ENCODE measurements at regions of chr9 and their contacts with region 1.

Region 1: DNA sequence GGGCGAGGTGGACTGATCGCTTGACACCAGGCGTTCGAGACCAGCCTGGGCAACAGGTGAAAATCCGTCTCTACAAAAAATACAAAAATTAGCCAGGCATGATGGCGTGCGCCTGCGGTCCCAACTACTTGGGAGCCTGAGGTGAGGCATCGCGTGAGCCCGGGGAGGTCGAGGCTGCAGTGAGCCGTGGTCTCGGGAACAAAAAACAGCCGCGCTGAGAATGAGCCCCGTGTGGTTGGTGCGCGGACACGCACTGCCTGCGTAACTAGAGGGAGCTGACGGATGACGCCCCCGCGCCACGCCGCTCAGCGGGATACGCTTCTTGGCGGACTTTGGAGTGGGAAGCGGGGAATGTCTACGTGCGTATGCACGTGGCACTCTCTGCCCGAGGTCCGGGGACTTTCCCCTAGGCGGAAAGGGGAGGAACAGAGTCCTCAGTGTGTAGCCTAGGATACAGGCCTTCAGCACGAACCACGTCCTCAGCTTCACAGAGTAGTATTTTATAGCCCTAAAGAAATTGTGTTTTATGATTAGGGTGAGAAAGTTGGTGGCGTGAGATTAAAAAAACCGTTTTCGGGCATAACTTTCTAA is at the start of gene RMRP:
- DNase-seq: peak; percentile 91 to 96 (median 93)
- H3K4me3 ChIP-seq: peak within 1 kb of the TSS; percentile 67 to 90
- H3K4me3 Mint-ChIP-seq: peak within 1 kb of the TSS; percentile 86 to 95 (median 92)
- H3K27ac ChIP-seq: peak within 1 kb of the TSS; percentile 96
- H3K27ac Mint-ChIP-seq: peak within 1 kb of the TSS; percentile 95 to 100 (median 99)
- H3K4me1 ChIP-seq: peaks cover 64% of the 10 kb centered on the region
- H3K4me1 Mint-ChIP-seq: peaks cover 52 to 78% (median 64%) of the 10 kb centered on the region in 4 donors
- H3K27me3 ChIP-seq: no peaks in the 10 kb centered on the region
- H3K27me3 Mint-ChIP-seq: peaks cover 2 to 4% of the 10 kb centered on the region in 2 donors
- total RNA-seq, gene RMRP: 18,678 to 21,585 TPM

Region 2: DNA sequence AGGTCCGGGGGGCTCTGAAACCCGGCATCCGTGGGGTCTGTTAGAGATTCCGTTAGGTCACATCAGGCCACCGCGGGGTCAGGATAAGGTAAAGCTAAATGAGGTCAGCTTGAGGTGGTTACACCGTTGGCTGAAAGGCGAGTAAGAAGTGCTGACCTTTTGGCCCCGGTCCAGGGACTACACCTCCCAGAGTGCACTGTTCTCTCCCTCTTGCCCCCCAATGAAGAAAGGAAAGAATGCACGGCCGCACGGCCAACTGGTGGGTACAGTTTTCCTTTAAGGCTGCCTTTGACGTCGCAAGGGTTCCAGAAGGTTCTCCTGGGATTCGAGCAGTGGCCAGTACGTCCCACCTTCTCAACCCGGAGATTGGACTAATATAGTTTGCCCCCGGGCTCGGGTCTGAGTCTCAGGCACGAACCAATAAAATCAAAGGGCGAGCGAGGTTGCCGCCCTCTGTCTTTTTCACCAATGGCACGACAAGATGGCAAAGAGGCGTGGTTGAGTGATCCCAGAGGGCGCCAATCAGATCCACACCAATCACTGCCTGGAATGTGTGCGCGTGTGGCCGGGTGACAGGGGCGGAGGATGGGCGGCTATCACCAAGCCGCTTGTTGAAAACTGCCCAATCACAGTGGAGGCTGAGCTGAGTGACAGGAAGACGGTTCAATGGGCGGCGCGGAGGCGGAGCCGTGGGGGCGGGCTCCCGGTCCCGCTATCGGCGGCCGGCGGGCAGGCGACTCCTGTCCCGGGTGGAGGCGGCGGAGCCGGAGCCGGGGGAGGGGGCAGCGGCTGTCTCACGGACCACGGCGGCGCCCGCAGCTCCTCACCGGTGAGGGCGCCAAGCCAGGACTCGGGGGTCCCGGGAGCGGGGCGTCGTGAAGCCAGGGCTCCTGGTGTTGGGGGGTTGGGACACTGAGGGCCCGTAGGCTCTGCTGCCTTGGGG is 668.4 kb before region 1 on chr9 and contains the start of gene DNAJB5:
- CTCF ChIA-PET with region 1: no interaction called
- POLR2A ChIA-PET with region 1: no interaction called
- intact Hi-C with region 1: loop called (anchors 5 kb)
- DNase-seq: peak; percentile 96 to 99 (median 98)
- H3K4me3 ChIP-seq: peak within 1 kb of the TSS; percentile 47 to 83
- H3K4me3 Mint-ChIP-seq: peak within 1 kb of the TSS; percentile 90 to 99 (median 94)
- H3K27ac ChIP-seq: peak within 1 kb of the TSS; percentile 69
- H3K27ac Mint-ChIP-seq: peak within 1 kb of the TSS; percentile 84 to 95 (median 94)
- H3K4me1 ChIP-seq: peaks cover 42% of the 10 kb centered on the region
- H3K4me1 Mint-ChIP-seq: peaks cover 28 to 62% (median 48%) of the 10 kb centered on the region in 4 donors
- H3K27me3 ChIP-seq: no peaks in the 10 kb centered on the region
- H3K27me3 Mint-ChIP-seq: no peaks in the 10 kb centered on the region
- total RNA-seq, gene DNAJB5: 0.73 to 0.97 TPM

Region 3: GRCh38 chr9:35593581-35593980 is 64.1 kb before region 1 on chr9:
- CTCF ChIA-PET with region 1: no interaction called
- POLR2A ChIA-PET with region 1: no interaction called
- intact Hi-C with region 1: no loop called
- DNase-seq: no peak
- H3K4me3 ChIP-seq: no peak overlapping the region
- H3K4me3 Mint-ChIP-seq: no peak overlapping the region
- H3K27ac ChIP-seq: no peak overlapping the region
- H3K27ac Mint-ChIP-seq: no peak overlapping the region
- H3K4me1 ChIP-seq: no peaks in the 10 kb centered on the region
- H3K4me1 Mint-ChIP-seq: no peaks in the 10 kb centered on the region
- H3K27me3 ChIP-seq: no peaks in the 10 kb centered on the region
- H3K27me3 Mint-ChIP-seq: no peaks in the 10 kb centered on the region

Region 4: DNA sequence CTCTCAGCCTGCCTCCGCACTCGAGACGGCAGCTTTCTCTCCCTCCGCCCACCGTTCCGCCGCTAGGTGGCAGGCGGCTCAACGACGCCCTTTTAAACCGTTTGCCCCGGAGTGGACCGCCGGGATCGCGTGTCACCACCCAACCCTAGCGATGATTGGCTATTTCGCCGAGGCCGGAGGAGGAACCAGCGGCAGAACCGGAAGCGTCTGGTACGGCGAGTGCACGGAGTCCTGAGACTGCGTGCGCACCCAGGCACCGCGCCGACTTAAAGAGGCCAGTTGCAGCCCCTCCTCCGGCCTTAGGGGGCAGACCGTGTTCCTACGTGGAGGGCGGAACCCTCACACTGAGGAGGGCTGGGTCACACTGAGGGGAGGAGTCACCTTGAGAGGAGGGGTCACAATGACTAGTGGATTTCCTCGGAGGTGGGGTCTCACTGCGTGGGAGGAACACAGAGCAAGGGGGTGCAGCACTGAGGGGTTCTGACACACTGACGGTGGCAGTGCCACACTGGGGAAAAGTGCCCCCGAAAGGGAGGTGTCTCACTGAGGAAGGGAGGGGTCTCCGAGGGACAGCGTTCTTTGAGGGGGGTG is 53.6 kb before region 1 on chr9:
- CTCF ChIA-PET with region 1: interaction called, 23 read pairs
- POLR2A ChIA-PET with region 1: interaction called, 47 read pairs
- intact Hi-C with region 1: loop called (anchors 1 kb)
- DNase-seq: peak; percentile 98 to 99 (median 99)
- H3K4me3 ChIP-seq: peak overlapping the region; percentile 75 to 84
- H3K4me3 Mint-ChIP-seq: peak overlapping the region; percentile 95 to 100 (median 98)
- H3K27ac ChIP-seq: peak overlapping the region; percentile 85
- H3K27ac Mint-ChIP-seq: peak overlapping the region; percentile 96 to 100 (median 99)
- H3K4me1 ChIP-seq: peaks cover 37% of the 10 kb centered on the region
- H3K4me1 Mint-ChIP-seq: peaks cover 25 to 47% (median 32%) of the 10 kb centered on the region in 4 donors
- H3K27me3 ChIP-seq: no peaks in the 10 kb centered on the region
- H3K27me3 Mint-ChIP-seq: no peaks in the 10 kb centered on the region

Region 5: DNA sequence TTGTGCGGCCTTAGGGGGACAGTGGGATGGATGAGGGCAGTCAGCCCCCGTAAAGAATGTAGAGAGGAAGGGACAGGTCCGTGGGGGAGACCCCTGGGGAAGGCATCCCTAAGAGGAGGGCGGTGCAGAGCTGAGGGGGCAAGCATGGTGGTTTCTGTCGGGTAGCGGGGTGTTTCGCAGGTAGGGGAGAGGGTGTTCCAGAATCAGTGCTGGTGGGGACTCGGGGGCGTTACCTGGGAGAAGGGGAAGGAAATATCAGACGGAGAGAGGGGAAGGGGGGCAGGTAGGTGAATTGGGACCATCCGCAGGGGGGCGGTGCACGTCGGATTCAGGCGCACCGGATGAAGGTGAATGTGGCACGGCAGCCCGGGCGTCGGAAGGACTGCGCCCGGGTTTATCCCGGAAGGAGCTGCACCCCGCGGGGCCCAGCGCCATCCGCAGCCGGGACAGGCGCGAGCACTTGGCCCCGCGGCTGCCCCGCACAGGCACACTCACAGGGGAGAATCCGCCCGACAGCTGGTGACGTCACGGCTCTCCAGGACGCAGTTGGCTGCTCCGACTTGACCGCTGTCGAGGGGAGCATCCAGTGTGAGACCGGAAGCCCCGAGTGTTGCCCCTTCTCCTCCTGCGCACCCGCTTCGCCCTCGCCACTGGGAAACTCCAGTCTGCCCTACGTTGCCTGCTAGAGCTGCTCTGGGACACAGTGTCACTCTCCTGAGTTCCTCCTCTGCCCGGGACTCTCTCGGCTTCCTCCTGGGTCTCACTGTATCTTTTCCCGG is 40.8 kb before region 1 on chr9:
- CTCF ChIA-PET with region 1: interaction called, 145 read pairs
- POLR2A ChIA-PET with region 1: interaction called, 80 read pairs
- intact Hi-C with region 1: no loop called
- DNase-seq: peak; percentile 63 to 75 (median 64)
- H3K4me3 ChIP-seq: peak overlapping the region; percentile 63 to 64
- H3K4me3 Mint-ChIP-seq: peak overlapping the region; percentile 84 to 91 (median 88)
- H3K27ac ChIP-seq: peak overlapping the region; percentile 60
- H3K27ac Mint-ChIP-seq: peak overlapping the region; percentile 89 to 95 (median 93)
- H3K4me1 ChIP-seq: peaks cover 36% of the 10 kb centered on the region
- H3K4me1 Mint-ChIP-seq: peaks cover 26 to 58% (median 35%) of the 10 kb centered on the region in 4 donors
- H3K27me3 ChIP-seq: no peaks in the 10 kb centered on the region
- H3K27me3 Mint-ChIP-seq: no peaks in the 10 kb centered on the region

Region 6: GRCh38 chr9:35646533-35647265 is 10.9 kb before region 1 on chr9:
- CTCF ChIA-PET with region 1: interaction called, 260 read pairs
- POLR2A ChIA-PET with region 1: interaction called, 420 read pairs
- intact Hi-C with region 1: loop called (anchors 1 kb)
- DNase-seq: peak; percentile 91 to 95 (median 91)
- H3K4me3 ChIP-seq: peak overlapping the region; percentile 78 to 96
- H3K4me3 Mint-ChIP-seq: peak overlapping the region; percentile 93 to 98 (median 94)
- H3K27ac ChIP-seq: peak overlapping the region; percentile 88
- H3K27ac Mint-ChIP-seq: peak overlapping the region; percentile 89 to 99 (median 97)
- H3K4me1 ChIP-seq: peaks cover 56% of the 10 kb centered on the region
- H3K4me1 Mint-ChIP-seq: peaks cover 29 to 87% (median 47%) of the 10 kb centered on the region in 4 donors
- H3K27me3 ChIP-seq: no peaks in the 10 kb centered on the region
- H3K27me3 Mint-ChIP-seq: no peaks in the 10 kb centered on the region

Region 7: GRCh38 chr9:35756275-35757225 is 98.9 kb after region 1 on chr9:
- CTCF ChIA-PET with region 1: interaction called, 13 read pairs
- POLR2A ChIA-PET with region 1: interaction called, 14 read pairs
- intact Hi-C with region 1: no loop called
- DNase-seq: peak; percentile 68 to 80 (median 71)
- H3K4me3 ChIP-seq: peak overlapping the region; percentile 62 to 90
- H3K4me3 Mint-ChIP-seq: peak overlapping the region; percentile 97 to 100 (median 98)
- H3K27ac ChIP-seq: peak overlapping the region; percentile 70
- H3K27ac Mint-ChIP-seq: peak overlapping the region; percentile 81 to 99 (median 98)
- H3K4me1 ChIP-seq: peaks cover 22% of the 10 kb centered on the region
- H3K4me1 Mint-ChIP-seq: peaks cover 24 to 67% (median 49%) of the 10 kb centered on the region in 4 donors
- H3K27me3 ChIP-seq: no peaks in the 10 kb centered on the region
- H3K27me3 Mint-ChIP-seq: no peaks in the 10 kb centered on the region

Region 8: DNA sequence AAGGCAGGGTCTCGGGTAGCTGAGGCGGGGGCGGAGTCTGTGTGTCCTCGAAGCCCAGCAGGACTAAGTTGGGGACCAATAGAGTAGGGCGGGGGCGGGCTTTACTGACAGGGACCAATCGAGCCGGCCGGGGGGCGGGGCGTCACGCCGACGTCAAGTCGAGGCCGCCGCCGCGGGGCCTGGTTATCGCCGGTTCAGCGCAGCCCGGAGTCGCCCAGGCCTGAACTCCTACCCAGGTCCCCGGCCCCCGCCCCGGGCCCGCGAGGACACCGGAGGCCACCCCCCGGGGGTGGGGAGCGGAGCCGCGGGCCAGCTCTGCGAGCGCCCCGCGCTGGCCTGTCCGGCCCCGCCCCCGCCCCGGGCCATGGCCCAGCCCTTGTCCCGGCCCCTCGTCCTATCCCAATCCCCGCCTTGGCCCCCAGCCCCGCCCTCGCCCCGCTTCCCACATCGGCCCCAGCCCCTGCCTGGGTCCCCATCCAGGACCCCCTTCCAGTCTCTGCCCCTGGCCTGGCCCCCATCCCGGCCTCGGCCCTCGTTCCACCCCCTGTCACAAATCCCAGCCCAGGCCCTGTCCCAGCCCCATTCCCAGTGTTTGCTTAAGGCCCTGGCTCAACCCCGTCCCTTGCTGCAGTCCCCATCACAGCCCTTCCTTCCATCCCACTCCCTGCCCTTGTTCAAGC is 171.6 kb after region 1 on chr9 and contains the start of gene TMEM8B:
- CTCF ChIA-PET with region 1: interaction called, 8 read pairs
- POLR2A ChIA-PET with region 1: interaction called, 5 read pairs
- intact Hi-C with region 1: loop called (anchors 1 kb)
- DNase-seq: peak; percentile 85 to 96 (median 88)
- H3K4me3 ChIP-seq: peak within 1 kb of the TSS; percentile 61 to 70
- H3K4me3 Mint-ChIP-seq: peak within 1 kb of the TSS; percentile 92 to 100 (median 96)
- H3K27ac ChIP-seq: peak within 1 kb of the TSS; percentile 66
- H3K27ac Mint-ChIP-seq: peak within 1 kb of the TSS; percentile 74 to 99 (median 98)
- H3K4me1 ChIP-seq: peaks cover 20% of the 10 kb centered on the region
- H3K4me1 Mint-ChIP-seq: peaks cover 23 to 39% (median 35%) of the 10 kb centered on the region in 4 donors
- H3K27me3 ChIP-seq: no peaks in the 10 kb centered on the region
- H3K27me3 Mint-ChIP-seq: no peaks in the 10 kb centered on the region
- total RNA-seq, gene TMEM8B: 7.4 to 10.5 TPM

Region 9: GRCh38 chr9:36530224-36530623 is 872.6 kb after region 1 on chr9:
- CTCF ChIA-PET with region 1: no interaction called
- POLR2A ChIA-PET with region 1: no interaction called
- intact Hi-C with region 1: no loop called
- DNase-seq: no peak
- H3K4me3 ChIP-seq: no peak overlapping the region
- H3K4me3 Mint-ChIP-seq: no peak overlapping the region
- H3K27ac ChIP-seq: no peak overlapping the region
- H3K27ac Mint-ChIP-seq: no peak overlapping the region
- H3K4me1 ChIP-seq: no peaks in the 10 kb centered on the region
- H3K4me1 Mint-ChIP-seq: peaks cover 0 to 4% (median 0%) of the 10 kb centered on the region in 4 donors
- H3K27me3 ChIP-seq: no peaks in the 10 kb centered on the region
- H3K27me3 Mint-ChIP-seq: no peaks in the 10 kb centered on the region